HEK293 (cell line): ENCODE measurements at regions of chr20 and their contacts with region 1.

Region 1: GRCh38 chr20:43749734-43750294 is 23.0 kb upstream of the GTSF1L start:
- H3K4me3 ChIP-seq: no peak overlapping the region
- H3K27ac ChIP-seq: no peak overlapping the region
- H3K4me1 ChIP-seq: peaks cover 9% of the 10 kb centered on the region
- CTCF ChIP-seq: peak; percentile 86

Region 2: GRCh38 chr20:43287637-43288036 is 462.2 kb before region 1 on chr20:
- CTCF ChIA-PET with region 1: no interaction called
- POLR2A ChIA-PET with region 1: no interaction called
- H3K4me3 ChIP-seq: no peak overlapping the region
- H3K27ac ChIP-seq: no peak overlapping the region
- H3K4me1 ChIP-seq: no peaks in the 10 kb centered on the region
- CTCF ChIP-seq: no peak

Region 3: DNA sequence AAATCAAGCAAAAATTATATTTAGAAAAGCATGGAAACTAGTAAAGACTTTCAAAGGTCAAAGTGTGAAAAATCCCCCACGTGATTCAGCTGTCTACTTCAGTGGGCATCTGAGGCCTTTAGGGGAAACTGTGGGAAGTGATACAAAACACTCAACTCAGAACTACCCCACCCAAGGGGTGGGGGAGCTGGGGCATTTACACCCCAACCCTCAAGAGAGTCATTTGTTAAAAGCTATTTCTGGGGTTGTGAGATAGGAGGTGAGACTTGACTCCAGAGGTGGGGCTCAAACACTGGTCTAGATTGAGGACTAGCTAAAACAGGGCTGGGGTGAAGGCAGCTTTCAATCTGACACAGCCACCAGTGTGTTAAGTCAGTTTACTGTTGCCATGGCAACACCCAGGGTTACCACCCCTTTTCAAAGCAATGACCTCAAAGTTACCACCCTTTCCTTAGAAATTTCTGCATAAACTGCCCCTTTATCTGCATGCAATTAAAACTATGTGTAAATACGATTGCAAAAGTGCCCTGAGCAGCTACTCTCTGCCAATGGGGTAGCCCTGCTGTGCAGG is 13.1 kb before region 1 on chr20:
- CTCF ChIA-PET with region 1: interaction called, 10 read pairs
- POLR2A ChIA-PET with region 1: no interaction called
- H3K4me3 ChIP-seq: no peak overlapping the region
- H3K27ac ChIP-seq: no peak overlapping the region
- H3K4me1 ChIP-seq: no peaks in the 10 kb centered on the region
- CTCF ChIP-seq: no peak

Region 4: DNA sequence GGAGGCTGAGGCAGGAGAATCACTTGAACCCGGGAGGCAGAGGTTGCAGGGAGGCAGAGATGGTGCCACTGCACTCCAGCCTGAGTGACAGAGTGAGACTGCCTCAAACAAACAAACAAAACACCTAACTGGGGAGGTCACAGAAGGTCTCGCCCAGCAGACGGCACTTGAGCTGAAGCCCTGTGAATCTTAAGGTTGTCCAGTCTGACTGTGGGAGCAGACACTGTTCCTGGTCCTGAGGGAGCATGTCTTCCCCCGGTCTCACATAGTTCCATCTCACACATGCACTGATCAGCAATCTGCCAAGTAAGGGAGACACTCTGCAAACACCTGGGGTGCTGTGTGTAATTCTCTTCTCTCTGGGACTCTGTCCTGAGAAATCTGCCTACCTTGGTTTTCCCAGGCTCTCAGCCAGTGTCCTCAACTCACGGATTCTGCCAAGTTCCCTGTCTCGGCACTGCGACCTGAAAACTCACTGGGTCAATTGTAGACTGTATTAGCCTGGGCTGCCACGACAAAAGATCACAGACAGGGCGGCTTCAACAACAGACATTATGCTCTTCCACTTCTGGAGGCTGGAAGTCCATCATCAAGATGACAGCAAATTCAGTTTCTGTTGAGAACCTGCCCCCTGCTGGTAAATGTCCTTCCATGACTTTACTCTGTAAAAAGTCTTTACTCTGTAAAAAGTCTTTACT is 342.9 kb after region 1 on chr20:
- CTCF ChIA-PET with region 1: interaction called, 20 read pairs
- POLR2A ChIA-PET with region 1: no interaction called
- H3K4me3 ChIP-seq: no peak overlapping the region
- H3K27ac ChIP-seq: no peak overlapping the region
- H3K4me1 ChIP-seq: no peaks in the 10 kb centered on the region
- CTCF ChIP-seq: no peak